ENCODE measurements at regions of chrX and their contacts with region 1.

Region 1: GRCh38 chrX:43958529-43958928 is 14.7 kb downstream of the NDP start:
- DNase-seq: peak; percentile 54
- H3K27ac ChIP-seq: no peak overlapping the region
- CTCF ChIP-seq: peak; percentile 65

Region 2: GRCh38 chrX:43436517-43436916 is 522.0 kb before region 1 on chrX:
- CTCF ChIA-PET with region 1: no interaction called
- POLR2A ChIA-PET with region 1: no interaction called
- DNase-seq: no peak
- H3K27ac ChIP-seq: no peak overlapping the region
- CTCF ChIP-seq: no peak

Region 3: DNA sequence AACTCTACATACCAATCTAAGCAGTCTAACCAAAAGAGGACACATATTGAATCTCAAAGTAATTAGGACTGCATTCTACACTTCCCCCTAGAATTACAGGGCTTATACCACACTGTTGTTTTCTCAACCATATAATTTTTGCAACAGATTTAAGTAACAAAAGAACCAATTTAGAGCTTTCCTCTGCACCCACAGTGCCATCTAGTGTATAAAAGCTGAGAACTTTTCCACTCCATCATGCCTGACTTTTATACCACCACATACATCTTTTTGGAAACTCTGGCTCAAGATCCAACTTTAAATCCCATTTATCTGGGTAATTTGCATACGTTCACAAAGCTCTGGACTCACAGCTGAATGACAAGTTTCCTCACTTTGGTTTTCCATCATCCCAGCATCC is 285.5 kb after region 1 on chrX:
- CTCF ChIA-PET with region 1: interaction called, 25 read pairs
- POLR2A ChIA-PET with region 1: no interaction called
- DNase-seq: peak; percentile 13
- H3K27ac ChIP-seq: no peak overlapping the region
- CTCF ChIP-seq: peak; percentile 53

Measured in RWPE1 (cell line).